GM13976 (cell line): ENCODE measurements at regions of chr6 and their contacts with region 1.

Region 1: GRCh38 chr6:97524811-97525210 is 241.8 kb upstream of the MMS22L start:
- DNase-seq: no peak
- CTCF ChIP-seq: no peak

Region 2: DNA sequence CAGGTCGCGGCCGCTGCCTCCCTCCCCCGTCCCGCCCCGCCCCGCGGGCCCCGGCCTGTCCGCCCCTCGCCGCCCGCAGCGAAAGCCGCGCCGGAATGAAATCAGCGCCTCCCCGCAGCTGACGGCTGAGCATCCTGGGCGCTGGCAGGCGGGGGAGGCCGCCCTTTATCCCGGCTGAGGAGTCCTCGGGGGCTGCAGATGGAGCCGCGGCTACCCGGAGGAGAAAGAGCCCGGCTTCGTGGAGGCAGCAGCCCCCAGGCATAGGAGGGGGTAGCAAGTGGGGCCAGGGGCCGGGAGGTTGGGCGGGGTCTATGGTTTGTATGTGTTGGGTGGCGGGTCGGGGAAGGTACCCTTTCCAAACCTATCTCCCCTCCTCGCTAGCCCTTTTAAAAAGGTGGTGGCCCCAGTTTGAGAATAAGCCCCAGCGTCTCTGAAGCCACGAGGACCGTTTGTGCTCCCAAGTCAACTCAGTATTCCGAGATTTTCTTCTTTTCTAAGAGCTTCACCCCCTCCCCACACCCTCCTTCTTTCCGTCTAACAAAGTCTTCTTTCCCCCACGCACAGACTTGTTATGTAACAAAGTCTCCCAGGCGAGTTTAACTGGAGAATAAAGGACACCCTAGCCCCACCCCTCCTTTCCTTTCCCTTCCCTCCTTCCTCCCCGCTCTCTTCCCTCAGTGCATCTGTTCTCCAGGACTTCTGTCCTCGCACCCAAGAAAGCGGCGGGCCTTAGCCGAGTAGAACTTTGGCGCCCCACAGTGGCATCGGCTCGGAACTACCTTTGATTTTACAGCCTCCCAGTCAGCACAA is 1320.6 kb after region 1 on chr6:
- in situ Hi-C with region 1: loop called (anchors 25 kb)
- DNase-seq: peak; percentile 77
- CTCF ChIP-seq: peak; percentile 89